Posterior cingulate gyrus (tissue), 11 donors: ENCODE measurements at regions of chr1 and their contacts with region 1.

Region 1: GRCh38 chr1:150876119-150876454 is 312 bp downstream of the ARNT start:
- DNase-seq: peak in 6 of 10 donors; percentile 45 to 90 (median 50)

Region 2: GRCh38 chr1:150979092-150980056 is 103.3 kb after region 1 on chr1:
- intact Hi-C with region 1: loop called (anchors 5 kb)
- DNase-seq: peak; percentile 58 to 95 (median 86)

Region 3: DNA sequence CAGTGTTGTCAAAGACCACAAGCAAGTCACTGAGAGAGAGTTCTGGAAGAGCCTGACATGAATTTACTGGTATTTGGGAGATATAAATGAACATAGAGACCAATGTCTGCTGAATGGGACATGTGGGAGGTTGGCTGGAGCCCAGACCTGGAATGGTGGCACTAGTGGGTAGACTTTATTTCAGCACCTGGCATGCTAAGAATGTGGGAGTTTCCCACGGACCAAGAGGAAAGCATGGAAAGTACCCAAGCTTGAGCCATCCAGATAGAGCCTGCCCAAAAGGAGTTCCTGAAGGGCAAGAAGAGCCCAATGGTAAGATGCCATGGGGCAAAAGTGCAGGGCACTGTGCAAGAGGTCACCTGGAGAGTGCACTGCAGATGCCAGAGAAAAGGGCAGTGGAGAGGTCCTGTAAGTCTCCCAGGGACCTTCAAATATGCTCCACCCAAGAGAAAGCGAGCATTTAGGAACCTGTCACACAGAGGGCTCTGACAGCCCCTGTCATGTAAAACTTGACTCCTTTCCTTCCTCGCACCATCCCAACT is 397.9 kb after region 1 on chr1:
- intact Hi-C with region 1: no loop called
- DNase-seq: peak in 1 of 10 donors; percentile 1